Natural killer cell (primary cell): ENCODE measurements at regions of chr9 and their contacts with region 1.

Region 1: DNA sequence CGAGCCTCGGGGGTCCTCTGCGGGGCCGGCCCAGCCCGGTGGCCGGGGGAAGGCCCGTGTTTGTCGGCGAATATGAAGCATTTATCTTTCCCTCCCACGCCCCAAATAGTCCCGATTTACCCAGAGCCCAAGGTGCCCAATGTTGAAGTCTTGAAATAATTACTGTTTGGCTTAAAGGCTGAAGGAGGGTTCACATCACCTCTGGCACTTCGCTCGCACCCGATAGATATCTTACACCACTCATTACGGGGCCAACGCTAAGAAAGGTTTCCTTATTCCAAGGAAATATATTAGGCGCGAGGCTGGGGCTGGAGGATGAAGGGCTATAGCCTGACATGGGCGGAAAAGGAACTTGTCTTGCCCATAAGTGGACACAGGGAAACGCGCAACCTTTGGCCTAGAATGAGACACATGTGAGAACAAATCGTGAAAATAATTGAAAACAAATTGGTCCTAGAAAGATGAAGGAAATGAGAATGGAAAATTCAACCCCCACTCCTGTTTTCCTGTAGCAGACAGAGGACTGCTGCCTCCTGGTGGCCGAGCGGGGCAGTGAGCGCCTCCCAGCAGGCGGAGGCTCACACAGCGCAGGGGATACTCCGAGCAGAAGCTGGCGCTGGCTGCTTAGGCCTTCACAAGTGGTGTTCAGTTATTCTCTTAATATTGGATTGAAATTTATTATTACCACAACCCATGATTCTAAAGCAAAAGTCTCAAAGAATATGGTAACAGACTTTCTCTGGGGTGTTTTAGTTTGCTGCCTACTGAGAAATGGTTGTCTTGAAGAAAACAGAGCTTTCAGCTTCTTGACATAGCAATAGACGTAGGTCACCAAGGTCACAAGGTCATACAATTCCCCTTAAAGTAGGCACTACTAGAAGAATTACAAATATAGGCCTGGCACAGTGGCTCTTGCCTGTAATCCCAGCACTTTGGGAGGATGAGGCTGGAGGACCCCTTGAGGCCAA is 7.9 kb downstream of the CCL21 start:
- DNase-seq: peak; percentile 70 to 87
- ATAC-seq: peak; percentile 81 to 86 (median 82)
- H3K4me3 ChIP-seq: peak overlapping the region; percentile 33
- H3K4me3 Mint-ChIP-seq: peak overlapping the region; percentile 72
- H3K27ac ChIP-seq: no peak overlapping the region
- H3K27ac Mint-ChIP-seq: peak overlapping the region in 1 of 2 donors; percentile 59
- H3K4me1 ChIP-seq: peaks cover 11% of the 10 kb centered on the region
- H3K4me1 Mint-ChIP-seq: peaks cover 5 to 21% of the 10 kb centered on the region in 2 donors
- H3K27me3 ChIP-seq: peaks cover 8% of the 10 kb centered on the region
- H3K27me3 Mint-ChIP-seq: peaks cover 14 to 22% of the 10 kb centered on the region in 2 donors
- CTCF ChIP-seq: peak; percentile 89

Region 2: DNA sequence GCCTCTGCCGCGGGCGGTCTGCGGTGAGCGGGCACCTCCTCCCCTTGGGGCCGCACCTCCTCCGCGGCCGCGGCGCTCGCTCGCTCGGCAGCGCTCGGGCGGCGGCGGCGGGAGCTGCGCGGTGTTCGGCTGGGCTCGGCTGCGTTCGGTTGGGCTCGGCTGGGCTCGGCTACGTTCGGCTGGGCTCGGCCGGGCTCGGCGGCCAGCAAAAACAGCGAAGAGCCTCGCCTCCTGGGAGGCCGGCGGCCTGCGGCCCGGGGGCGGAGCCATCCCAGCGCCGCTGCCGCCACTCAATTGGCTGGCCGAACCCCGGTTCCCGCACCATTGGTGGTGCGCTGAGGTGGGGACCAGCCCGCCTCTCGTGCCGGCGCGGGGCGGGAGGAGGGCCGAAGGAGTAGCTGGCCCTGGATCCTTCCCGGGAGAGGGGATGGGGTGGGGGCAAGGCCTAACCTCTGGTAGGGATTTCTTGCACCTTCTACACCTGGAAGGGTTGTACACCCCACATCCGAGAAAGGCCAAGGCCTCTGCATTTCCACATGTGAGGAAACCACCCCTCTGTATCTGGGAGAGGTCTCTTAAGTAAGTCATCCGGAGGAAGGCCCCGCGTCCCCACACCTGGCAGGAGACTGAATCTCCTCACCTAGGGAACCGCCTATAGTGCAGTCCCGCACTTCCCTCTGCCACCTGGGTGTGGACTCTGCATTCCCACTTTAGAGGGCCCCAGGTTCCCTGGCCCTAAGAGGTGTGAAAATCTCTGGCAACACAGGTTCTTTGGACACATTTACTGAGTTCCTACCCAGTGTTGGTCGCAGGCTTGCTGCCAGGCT is 178.9 kb before region 1 on chr9 and contains the start of gene ENHO:
- intact Hi-C with region 1: no loop called
- DNase-seq: peak; percentile 94 to 96
- ATAC-seq: peak; percentile 94 to 97 (median 97)
- H3K4me3 ChIP-seq: peak within 1 kb of the TSS; percentile 30
- H3K4me3 Mint-ChIP-seq: peak within 1 kb of the TSS; percentile 72
- H3K27ac ChIP-seq: no peak within 1 kb of the TSS
- H3K27ac Mint-ChIP-seq: peak within 1 kb of the TSS; percentile 16 to 82
- H3K4me1 ChIP-seq: peaks cover 17% of the 10 kb centered on the region
- H3K4me1 Mint-ChIP-seq: peaks cover 6 to 19% of the 10 kb centered on the region in 2 donors
- H3K27me3 ChIP-seq: peaks cover 3% of the 10 kb centered on the region
- H3K27me3 Mint-ChIP-seq: peaks cover 20 to 23% of the 10 kb centered on the region in 2 donors
- CTCF ChIP-seq: no peak
- total RNA-seq, gene ENHO: 0.34 to 1.7 TPM in 2 of 3 donors, not detected in the other

Region 3: DNA sequence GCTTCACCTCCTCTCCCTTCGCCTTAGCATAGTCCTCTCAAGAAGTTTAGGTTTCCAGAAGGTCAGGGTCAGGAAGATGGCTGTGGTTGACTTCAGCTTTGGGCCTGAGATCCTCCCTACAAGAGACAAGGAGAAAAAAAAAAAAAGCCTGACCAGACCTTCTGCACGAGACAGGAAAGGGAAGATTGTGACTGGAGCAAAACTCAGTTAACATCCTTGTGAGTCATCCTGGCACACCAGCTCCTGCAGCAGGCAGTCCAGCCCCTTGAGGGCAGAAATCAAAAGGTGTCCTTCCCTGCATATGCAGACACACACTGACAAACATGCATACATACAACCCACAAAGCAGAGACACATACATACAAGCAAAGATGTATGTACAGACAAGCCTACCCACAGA is 161.2 kb before region 1 on chr9:
- intact Hi-C with region 1: no loop called
- DNase-seq: no peak
- ATAC-seq: no peak
- H3K4me3 ChIP-seq: no peak overlapping the region
- H3K4me3 Mint-ChIP-seq: no peak overlapping the region
- H3K27ac ChIP-seq: no peak overlapping the region
- H3K27ac Mint-ChIP-seq: no peak overlapping the region
- H3K4me1 ChIP-seq: no peaks in the 10 kb centered on the region
- H3K4me1 Mint-ChIP-seq: no peaks in the 10 kb centered on the region
- H3K27me3 ChIP-seq: peaks cover 3% of the 10 kb centered on the region
- H3K27me3 Mint-ChIP-seq: peaks cover 11 to 12% of the 10 kb centered on the region in 2 donors
- CTCF ChIP-seq: no peak

Region 4: GRCh38 chr9:34665381-34666250 is 36.4 kb before region 1 on chr9:
- intact Hi-C with region 1: loop called (anchors 1 kb)
- DNase-seq: peak; percentile 82 to 97
- ATAC-seq: peak; percentile 85 to 93 (median 86)
- H3K4me3 ChIP-seq: peak overlapping the region; percentile 70
- H3K4me3 Mint-ChIP-seq: peak overlapping the region; percentile 90
- H3K27ac ChIP-seq: peak overlapping the region; percentile 96
- H3K27ac Mint-ChIP-seq: peak overlapping the region; percentile 86 to 92
- H3K4me1 ChIP-seq: peaks cover 24% of the 10 kb centered on the region
- H3K4me1 Mint-ChIP-seq: peaks cover 11 to 26% of the 10 kb centered on the region in 2 donors
- H3K27me3 ChIP-seq: no peaks in the 10 kb centered on the region
- H3K27me3 Mint-ChIP-seq: no peaks in the 10 kb centered on the region
- CTCF ChIP-seq: no peak

Region 5: DNA sequence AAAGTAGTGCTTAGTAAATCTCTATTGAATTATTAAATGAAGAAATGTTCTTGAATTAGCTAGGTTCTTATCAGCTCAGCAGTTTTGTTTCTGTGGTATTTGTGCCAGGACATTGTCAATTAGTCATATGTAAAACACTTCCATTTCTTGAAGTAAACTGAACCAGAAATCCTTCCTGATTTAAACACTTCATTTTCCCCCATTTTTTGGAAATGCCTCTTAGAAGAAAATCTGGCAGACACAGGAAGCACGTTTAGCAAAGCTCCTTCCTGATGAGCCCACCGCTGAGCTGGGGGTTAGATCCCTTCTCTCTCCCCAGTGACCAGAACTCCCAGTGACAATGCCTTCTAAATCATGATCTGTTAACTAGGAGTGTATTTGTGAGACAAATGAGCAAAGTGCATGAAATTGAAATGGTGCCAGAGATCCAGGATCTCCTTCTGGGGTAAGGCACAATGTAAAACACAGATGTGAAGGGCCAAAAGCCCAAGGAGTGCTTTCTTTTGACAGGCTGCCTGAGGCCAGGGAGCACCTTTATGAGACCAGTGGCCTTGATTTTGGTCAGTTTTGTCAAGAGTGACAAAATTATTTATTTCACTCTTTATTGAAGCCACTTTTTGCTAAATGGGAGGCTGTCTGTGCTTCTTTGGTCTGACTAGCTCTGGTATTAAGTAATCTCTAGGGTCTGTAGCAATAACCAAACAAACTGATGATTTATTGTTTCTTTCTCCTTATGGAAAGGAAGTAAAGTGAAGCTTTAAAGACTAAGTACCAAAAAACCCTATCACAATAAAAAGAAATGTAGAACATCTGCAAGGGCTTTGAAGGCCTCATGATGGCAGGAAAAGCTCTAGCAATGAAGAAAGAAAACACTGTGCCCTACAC is 762.3 kb after region 1 on chr9:
- intact Hi-C with region 1: no loop called
- DNase-seq: no peak
- ATAC-seq: no peak
- H3K4me3 ChIP-seq: no peak overlapping the region
- H3K4me3 Mint-ChIP-seq: no peak overlapping the region
- H3K27ac ChIP-seq: no peak overlapping the region
- H3K27ac Mint-ChIP-seq: no peak overlapping the region
- H3K4me1 ChIP-seq: no peaks in the 10 kb centered on the region
- H3K4me1 Mint-ChIP-seq: no peaks in the 10 kb centered on the region
- H3K27me3 ChIP-seq: no peaks in the 10 kb centered on the region
- H3K27me3 Mint-ChIP-seq: peaks cover 26 to 70% of the 10 kb centered on the region in 2 donors
- CTCF ChIP-seq: no peak